RWPE1 (cell line): ENCODE measurements at regions of chr1 and their contacts with region 1.

Region 1: DNA sequence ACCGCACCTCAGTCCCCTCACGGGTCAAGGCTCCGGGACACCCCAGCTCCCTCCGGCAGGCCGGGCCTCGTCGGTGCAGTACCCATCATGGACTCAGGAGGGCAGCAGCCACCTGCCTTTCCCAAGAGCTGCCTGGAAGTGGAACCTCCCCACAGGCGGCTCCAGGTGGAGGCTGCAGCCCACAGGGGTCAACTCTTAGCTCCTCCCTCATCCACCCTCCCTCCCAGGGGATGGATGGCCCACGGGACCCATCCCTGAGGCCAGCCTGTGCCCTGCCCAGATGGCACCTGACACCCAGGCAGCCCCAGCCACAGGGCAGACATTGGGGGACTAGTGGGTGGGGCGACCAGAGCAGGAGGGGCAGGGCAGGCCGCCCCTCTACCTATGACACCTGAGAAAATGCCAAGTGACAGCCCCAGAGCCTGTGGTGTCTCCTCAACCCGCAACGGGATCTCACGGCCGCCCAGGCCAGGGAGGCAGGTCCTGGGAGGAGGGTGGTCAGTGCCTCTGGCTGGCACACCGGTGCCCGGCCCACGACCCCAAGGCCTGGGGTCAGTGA is 1.2 kb upstream of the ARHGEF16 start:
- DNase-seq: peak; percentile 89
- H3K27ac ChIP-seq: peak overlapping the region; percentile 76
- CTCF ChIP-seq: peak; percentile 94

Region 2: DNA sequence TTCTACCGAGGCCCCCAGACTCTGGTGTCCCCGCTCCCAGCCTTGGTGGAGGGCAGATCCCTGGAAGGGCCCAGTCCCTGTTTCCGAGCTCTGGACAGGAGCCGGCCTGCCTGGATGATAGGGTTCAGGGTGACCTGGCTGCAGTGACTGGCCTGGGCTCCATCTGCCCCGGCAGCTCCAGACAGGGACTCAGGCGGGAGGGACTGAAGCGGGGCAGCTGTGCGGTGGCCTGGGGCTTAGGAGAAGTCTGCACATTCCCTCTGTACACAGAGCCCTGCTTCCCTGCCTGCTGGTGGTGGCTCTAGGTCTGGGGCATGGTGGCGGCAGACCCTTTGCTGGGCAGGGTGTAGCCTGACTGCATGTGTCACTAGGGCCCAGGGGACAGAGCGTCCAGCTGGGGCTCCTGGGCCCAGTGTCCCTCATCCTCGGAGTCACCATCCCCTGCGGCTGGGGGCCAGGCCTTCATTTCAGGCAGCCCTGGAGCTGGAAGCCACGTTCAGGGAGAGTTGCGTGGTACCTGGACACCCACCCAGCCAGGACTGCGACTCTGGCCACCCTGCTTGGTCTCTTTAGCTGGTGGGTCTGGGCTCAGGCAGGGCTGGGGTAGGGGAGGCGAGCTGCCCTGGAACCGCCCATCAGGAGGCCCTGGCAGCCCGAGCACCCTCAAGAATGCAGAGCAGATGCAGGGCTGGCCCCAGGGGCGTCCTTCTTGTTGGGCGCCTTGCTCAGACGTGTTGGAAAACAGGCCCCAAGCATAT is 10.8 kb after region 1 on chr1:
- CTCF ChIA-PET with region 1: interaction called, 12 read pairs
- POLR2A ChIA-PET with region 1: no interaction called
- DNase-seq: no peak
- H3K27ac ChIP-seq: peak overlapping the region; percentile 23
- CTCF ChIP-seq: no peak

Region 3: DNA sequence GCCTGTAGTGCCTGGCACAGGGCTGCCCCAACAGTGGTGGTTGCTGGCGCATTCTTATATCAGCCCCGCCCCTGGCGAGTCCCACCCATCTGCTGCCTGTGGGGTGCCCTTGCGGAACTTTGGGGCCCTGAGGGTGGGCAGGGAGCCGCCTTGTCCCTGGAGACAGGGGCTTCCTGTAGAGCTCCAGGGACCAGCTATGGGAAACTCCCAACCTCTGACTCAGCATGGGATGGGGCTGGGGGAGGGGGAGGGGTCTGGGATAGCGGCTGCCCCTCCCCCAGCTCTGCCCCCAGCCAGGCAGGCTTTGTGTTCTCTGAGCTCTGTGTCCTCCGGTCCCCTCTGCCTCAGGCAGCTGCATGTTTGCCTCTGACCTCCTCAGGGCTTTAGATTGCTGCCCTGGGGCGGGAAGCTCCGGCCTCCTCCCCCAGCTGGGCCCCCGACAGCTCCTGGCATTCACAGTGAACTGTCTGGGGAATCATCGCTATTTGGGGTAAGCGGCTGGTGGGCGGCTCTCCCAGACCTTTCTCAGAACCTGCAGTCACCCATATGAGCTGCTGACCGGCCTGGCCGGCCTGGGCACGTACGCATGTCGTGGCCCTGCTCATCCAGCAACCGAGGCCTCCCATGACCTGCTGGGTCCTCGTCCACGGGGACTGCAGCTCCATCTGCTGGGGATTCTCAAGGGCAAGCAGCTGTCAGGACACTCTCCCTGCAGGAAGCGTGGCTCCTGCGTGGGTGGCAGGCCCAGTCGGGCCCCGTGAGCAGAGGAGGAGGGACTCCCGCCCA is 18.2 kb after region 1 on chr1:
- CTCF ChIA-PET with region 1: interaction called, 106 read pairs
- POLR2A ChIA-PET with region 1: interaction called, 4 read pairs
- DNase-seq: peak; percentile 65
- H3K27ac ChIP-seq: peak overlapping the region; percentile 95
- CTCF ChIP-seq: no peak; the same call in 1 of the 2 replicates

Region 4: GRCh38 chr1:3483801-3484444 is 30.6 kb after region 1 on chr1:
- CTCF ChIA-PET with region 1: interaction called, 78 read pairs
- POLR2A ChIA-PET with region 1: no interaction called
- DNase-seq: peak; percentile 66
- H3K27ac ChIP-seq: peak overlapping the region; percentile 95
- CTCF ChIP-seq: peak; percentile 94

Region 5: DNA sequence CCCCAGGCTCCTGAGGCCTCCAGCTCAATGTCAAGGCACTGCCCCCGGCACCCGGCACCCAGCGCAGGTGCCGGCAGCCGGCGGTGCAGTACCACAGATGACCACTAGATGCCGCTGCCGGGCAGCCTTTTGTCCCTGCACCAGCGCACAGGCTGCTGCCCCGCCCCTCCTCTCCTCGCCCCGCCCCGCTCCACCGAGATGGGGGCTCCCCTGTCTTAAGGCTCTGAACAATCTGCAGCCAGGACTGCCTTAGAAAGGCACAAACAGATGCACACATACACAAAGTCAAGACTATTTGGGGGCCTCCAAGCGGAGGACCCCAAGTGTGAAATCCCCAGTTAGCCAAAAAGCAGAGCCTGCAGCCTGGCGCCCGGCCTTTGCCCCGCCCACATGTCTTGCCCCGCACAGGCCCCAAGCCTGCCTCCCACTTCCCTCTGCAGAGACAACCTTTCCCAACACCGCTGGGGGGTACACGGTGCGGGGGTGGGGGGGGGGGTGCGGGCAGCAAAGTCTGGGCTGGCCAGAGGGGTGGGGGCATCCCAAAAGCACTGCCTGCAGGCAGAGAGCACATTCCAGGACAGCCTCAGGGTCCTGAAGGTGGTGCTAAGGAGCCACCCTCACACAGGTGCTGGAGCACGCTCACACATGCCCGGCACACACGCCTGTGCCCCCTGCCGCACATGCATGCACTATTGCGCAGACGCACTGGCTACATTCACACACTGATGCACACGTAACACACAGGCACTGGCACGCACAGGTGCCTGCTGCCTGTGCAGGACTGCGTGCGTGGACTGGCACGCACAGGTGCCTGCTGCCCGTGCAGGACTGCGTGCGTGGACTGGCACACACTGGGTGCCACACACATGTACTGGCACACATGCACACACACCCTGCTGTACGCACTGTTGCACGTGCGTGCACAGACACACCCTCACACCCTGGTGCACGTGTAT is 38.3 kb after region 1 on chr1:
- CTCF ChIA-PET with region 1: interaction called, 19 read pairs
- POLR2A ChIA-PET with region 1: no interaction called
- DNase-seq: peak; percentile 66
- H3K27ac ChIP-seq: peak overlapping the region; percentile 24
- CTCF ChIP-seq: peak; percentile 95

Region 6: DNA sequence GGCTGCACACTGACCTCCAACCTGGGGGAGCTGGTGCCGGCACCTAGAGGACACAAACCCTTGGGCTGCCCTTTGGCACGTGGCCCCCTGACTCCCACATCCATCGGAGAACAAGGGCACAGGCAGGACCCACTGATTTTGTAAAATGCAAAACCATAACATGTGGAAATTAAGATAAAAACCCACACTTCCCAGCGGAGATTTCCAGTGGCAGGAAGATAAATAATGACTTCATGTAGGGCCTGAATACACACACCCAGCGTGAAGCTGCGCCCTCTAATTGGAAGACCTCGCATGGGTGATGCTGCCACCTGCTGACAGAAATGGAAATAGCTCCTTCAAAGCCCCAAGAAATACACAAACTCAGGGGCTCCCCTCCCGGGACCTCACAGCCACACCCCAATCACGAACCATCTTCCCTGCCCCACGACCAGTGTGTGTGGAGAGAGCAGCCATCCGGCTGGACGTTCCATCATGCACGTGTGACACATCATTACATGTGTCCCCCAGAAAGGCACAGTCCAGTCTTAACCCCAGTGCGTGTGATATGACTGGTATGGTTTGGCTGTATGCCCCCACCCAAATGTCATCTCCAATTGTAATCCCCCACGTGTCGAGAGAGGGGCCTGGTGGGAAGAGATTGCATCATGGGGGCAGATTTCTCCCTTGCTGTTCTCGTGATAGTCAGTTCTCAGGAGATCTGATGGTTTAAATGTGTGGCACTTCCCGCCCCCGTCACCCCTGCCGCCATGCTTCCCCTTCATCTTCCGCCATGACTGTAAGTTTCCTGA is 165.8 kb after region 1 on chr1:
- CTCF ChIA-PET with region 1: interaction called, 46 read pairs
- POLR2A ChIA-PET with region 1: no interaction called
- DNase-seq: peak; percentile 81
- H3K27ac ChIP-seq: no peak overlapping the region
- CTCF ChIP-seq: peak; percentile 83